ENCODE measurements at regions of chr1 and their contacts with region 1.

Region 1: GRCh38 chr1:203440771-203441170 is 34.8 kb upstream of the PRELP start:
- DNase-seq: peak; percentile 90 to 92
- ATAC-seq: peak; percentile 95
- H3K4me3 ChIP-seq: no peak overlapping the region
- H3K27ac ChIP-seq: peak overlapping the region in 1 of 2 donors; percentile 4
- H3K4me1 ChIP-seq: no peaks in the 10 kb centered on the region
- H3K27me3 ChIP-seq: no peaks in the 10 kb centered on the region

Region 2: GRCh38 chr1:203127666-203128430 is 312.9 kb before region 1 on chr1 and contains the start of gene ADORA1:
- intact Hi-C with region 1: no loop called
- DNase-seq: peak; percentile 75 to 88
- ATAC-seq: peak; percentile 78
- H3K4me3 ChIP-seq: peak within 1 kb of the TSS in 1 of 2 donors; percentile 9
- H3K27ac ChIP-seq: no peak within 1 kb of the TSS
- H3K4me1 ChIP-seq: no peaks in the 10 kb centered on the region
- H3K27me3 ChIP-seq: no peaks in the 10 kb centered on the region
- total RNA-seq, gene ADORA1: 0.71 to 2.5 TPM

Region 3: GRCh38 chr1:203267347-203267846 is 173.4 kb before region 1 on chr1:
- intact Hi-C with region 1: loop called (anchors 2 kb)
- DNase-seq: peak; percentile 88 to 94
- ATAC-seq: peak; percentile 88
- H3K4me3 ChIP-seq: peak overlapping the region; percentile 18 to 90
- H3K27ac ChIP-seq: peak overlapping the region in 1 of 2 donors; percentile 81
- H3K4me1 ChIP-seq: no peaks in the 10 kb centered on the region
- H3K27me3 ChIP-seq: no peaks in the 10 kb centered on the region

Region 4: DNA sequence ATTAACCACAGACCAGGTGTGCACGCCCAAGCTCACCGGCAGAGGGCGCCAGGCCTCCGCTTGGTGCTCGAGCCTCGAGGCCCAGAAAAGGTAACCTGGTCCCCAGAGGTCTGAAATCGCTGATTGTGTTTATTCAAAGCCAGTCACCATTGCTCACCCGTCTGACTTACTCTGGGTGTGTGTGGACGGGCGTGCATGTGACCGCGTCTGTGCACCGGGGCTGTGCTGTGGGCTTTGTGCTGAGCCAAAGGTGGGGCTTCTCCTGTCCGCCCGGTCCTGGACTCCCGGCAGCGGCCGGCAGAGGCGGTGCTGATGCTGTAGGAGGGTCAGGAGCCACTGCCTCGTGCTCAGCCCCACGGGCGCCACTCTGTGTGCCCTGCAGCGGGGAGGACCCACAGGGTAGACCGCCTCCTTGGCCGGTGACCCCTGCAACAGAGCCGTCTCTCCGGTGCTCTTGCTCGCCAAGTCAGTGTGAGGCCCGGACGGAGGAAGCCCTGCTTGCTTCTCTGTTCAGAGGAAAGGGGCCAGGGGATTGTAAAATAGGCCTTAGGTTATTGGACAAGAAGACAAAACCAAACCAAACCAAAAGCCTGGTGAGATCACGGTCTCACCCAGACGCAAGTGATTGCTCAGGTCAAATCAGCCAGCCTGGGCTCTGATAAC is 167.4 kb before region 1 on chr1:
- intact Hi-C with region 1: loop called in 1 of 2 experiments (anchors 2 kb)
- DNase-seq: peak; percentile 91 to 96
- ATAC-seq: peak; percentile 86
- H3K4me3 ChIP-seq: no peak overlapping the region
- H3K27ac ChIP-seq: peak overlapping the region; percentile 55 to 71
- H3K4me1 ChIP-seq: peaks cover 0 to 4% of the 10 kb centered on the region in 2 donors
- H3K27me3 ChIP-seq: no peaks in the 10 kb centered on the region

Region 5: DNA sequence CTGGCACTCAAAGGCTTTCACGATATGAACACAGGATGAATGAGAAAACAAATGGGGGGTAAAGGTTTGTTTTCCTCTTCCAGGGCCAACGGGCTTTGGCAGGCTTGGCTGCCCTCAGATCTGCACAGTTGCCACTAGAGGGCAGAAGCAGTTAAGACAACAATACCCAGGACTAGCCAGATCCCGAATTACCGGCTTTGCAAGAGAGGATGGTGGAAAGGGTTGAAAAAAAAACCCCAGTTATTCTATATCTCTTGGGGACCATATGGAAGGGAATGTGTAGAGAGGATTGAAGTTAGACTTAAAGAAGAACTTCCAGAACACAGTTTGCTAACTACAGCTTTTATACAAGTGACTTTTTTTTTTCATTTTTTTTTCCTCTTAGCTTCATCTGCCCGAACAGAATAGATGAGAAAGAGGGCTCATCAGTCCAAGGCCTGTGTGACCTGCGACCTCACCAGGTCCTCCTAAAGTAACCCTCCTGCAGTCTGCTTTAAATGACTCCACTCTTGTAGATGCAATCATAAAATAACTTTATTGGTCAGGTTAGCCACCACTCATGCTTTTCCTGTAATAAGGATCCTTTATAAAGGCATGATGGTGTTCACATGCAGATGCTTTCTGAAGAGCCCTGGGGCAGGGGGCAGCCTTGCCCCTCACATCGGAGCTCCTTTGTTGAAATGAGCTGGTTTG is 100.5 kb before region 1 on chr1:
- intact Hi-C with region 1: loop called (anchors 1 kb)
- DNase-seq: peak in 1 of 2 donors; percentile 70
- ATAC-seq: peak; percentile 82
- H3K4me3 ChIP-seq: no peak overlapping the region
- H3K27ac ChIP-seq: no peak overlapping the region
- H3K4me1 ChIP-seq: no peaks in the 10 kb centered on the region
- H3K27me3 ChIP-seq: no peaks in the 10 kb centered on the region

Region 6: DNA sequence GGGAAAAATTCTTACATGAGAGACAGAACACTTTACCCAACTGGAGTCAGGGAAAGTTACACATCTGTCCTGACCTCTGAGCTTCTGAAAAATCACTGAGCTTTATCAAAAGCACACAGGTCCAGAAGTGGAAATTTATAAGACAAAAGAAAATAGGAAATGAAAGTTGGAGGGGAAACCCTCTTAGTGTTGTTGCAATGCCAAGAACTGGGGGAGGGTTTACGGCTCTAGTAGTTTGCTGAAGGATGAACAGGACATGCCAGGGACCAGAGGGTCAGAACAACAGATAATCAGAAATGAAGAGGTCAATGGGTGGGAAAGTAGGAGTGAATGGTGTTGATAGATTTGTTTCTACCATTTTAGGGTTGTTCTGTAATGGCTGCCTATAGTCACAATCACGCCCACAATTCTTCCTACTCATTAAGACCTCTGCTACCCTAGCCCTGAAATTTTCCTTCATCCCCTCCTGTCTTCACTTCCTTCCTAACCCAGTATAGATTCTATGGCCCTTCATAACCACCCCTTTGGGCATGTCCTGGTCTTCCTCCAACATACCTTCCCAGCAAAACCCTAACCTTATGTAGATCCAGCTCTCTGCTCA is 59.5 kb before region 1 on chr1:
- intact Hi-C with region 1: loop called in 1 of 2 experiments (anchors 5 kb)
- DNase-seq: no peak
- ATAC-seq: peak; percentile 27
- H3K4me3 ChIP-seq: no peak overlapping the region
- H3K27ac ChIP-seq: peak overlapping the region in 1 of 2 donors; percentile 64
- H3K4me1 ChIP-seq: peaks cover 3 to 7% of the 10 kb centered on the region in 2 donors
- H3K27me3 ChIP-seq: no peaks in the 10 kb centered on the region

Region 7: DNA sequence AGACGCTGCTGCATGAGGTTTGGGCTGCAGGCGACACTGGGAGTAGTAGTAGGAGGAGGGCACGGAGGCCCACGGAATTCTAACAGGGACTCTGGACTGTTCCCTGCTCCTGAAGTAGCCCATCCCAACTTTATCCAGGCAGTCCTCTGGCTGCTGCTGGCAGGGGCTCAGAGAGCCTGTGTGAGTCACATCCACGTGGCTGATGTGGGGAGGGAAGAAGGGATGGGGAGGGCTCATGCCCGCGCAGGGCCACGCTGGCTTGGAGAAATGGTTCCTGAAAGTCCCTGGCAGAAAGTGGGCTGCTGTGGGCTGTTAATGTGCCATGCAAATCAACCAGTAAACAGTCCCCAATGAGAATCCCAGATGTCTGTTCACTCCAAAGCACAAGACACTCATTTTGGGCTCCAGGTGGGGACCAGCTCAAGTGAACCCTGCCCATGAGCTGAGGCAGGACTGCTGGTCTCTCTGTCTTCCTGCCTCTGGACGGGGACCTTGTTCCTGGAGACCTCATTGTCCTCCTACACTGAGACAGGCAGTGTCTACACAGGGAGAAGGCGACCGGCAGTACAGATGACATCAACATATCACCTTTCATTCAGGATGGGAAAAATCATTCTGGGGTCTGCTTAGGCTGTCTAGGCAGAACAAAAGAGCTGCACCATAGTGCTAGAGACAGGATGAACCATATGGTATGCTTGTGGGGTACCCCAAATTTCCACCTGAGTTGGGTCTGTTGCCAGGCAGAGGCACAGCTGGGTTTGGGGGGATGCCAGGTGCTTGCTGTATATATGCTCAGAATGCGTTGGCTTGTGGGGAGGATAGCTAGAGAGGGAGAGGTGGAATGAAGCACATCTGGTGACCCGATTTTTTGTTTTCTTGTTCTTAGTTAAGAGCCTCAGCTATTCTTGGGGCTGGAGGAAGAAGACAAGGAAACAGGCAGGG is 32.0 kb before region 1 on chr1:
- intact Hi-C with region 1: loop called in 1 of 2 experiments (anchors 5 kb)
- DNase-seq: peak; percentile 95
- ATAC-seq: peak; percentile 93
- H3K4me3 ChIP-seq: no peak overlapping the region
- H3K27ac ChIP-seq: peak overlapping the region; percentile 62 to 98
- H3K4me1 ChIP-seq: peaks cover 4 to 8% of the 10 kb centered on the region in 2 donors
- H3K27me3 ChIP-seq: no peaks in the 10 kb centered on the region

Region 8: DNA sequence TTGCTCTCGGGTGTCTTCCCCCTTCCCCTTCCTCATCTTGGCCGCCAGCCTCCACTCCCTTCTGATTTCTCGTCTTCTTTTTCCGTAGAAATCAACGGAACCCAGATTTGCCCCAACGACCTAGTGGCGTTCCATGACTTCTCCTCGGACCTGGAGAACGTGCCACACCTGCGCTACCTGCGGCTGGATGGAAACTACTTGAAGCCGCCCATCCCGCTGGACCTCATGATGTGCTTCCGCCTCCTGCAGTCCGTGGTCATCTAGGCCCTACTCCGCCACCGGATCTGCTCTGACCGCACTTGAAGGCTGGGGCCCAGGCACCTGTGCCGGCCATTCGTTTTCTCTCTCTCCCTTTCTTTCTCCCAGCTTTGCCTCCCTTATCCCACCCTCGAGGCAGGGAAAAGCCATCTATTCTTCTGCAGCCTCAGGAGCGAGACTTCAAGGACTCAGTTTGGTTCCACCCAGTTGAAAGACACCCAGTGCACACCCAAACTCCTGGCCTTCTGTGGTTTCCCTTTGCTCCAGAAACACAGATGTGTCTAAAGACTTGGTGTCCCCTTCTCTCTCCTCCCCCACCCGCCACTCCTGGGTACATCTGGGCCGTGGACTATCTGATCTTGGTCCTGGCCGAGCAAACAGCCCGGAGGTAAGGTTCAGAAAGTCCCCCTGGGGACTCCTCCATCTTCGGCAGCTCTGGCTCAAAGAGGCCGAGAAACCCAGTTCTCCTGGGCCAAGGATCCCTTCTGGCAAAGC is 46.0 kb after region 1 on chr1:
- intact Hi-C with region 1: loop called (anchors 2 to 5 kb)
- DNase-seq: no peak
- ATAC-seq: no peak
- H3K4me3 ChIP-seq: no peak overlapping the region
- H3K27ac ChIP-seq: peak overlapping the region in 1 of 2 donors; percentile 23
- H3K4me1 ChIP-seq: no peaks in the 10 kb centered on the region
- H3K27me3 ChIP-seq: no peaks in the 10 kb centered on the region

Measured in aorta (tissue), 5 donors.